A549 (cell line): ENCODE measurements at regions of chr17 and their contacts with region 1.

Region 1: DNA sequence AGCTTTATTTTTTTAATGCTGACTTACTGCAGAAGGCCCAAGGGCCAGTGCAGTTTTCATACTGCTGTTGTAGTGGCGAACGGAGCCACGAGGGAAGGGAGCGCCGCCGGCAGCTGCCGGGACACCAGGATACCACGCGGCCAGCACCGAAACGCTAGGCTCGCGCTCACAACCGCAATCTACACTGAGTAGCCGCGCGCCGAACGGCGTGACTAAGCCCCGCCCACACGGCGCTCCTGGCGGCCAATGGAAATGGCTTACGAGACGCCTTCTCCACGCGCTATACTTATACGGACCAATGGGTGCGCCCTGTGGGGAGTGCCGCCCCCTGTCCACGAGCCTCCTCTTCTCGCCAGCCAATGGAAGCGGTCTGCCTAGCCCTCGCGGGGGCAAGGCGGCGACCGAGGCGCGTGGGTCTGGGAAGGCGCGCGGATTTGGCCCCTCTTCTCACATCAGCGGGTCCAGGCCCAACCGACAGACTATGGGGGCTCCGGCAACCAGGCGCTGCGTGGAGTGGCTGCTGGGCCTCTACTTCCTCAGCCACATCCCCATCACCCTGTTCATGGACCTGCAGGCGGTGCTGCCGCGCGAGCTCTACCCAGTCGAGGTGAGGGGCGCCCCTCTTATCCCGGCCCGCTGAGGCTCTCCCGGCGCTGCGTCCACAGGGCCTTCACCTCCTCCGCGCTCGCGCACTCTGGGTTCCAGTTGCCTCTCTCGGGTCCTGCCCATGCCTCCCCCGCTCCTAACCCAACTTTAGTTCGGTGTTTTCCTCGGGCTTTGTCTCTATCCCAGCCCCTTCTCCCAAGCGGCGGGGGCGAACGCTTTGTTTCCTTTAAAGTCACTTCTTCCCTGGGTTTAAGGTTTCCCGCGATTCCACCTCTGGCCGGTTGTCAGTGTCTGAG is at the start of gene TMEM97:
- DNase-seq: peak; percentile 98
- ATAC-seq: peak; percentile 97 to 99
- H3K4me3 ChIP-seq: peak within 1 kb of the TSS; percentile 73
- H3K27ac ChIP-seq: peak within 1 kb of the TSS; percentile 76 to 88
- H3K4me1 ChIP-seq: peaks cover 45% of the 10 kb centered on the region
- CTCF ChIP-seq: no peak
- EP300 ChIP-seq: no peak
- POLR2A ChIP-seq: peak; percentile 80
- RAD21 ChIP-seq: no peak; a peak in 3 of 5 replicates
- polyA plus RNA-seq, gene TMEM97: 90.9 and 98.7 TPM in 2 replicates

Region 2: DNA sequence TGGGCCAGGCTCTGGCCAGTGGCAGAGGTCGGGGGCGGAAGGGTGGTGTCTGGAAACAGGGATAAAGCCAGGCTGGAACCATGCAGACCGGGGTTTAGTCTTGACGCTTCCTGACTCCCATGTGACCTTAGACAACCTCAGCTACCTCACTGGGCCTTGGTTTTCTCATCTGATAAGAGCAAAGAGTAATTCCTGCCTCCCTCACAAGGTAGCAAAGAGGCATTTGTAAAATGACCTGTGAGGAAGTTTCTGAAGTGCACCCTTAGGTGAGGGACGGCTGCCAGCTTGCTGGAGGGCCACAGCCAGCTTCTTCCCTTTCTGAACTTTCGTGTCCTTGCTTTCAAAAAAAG is 78.0 kb before region 1 on chr17:
- CTCF ChIA-PET with region 1: interaction called, 14 read pairs
- POLR2A ChIA-PET with region 1: no interaction called
- DNase-seq: no peak
- ATAC-seq: 0 out of 6 replicates have a peak, but pooled peaks of 1 of the 2 experiments have one; percentile 21
- H3K4me3 ChIP-seq: no peak overlapping the region
- H3K27ac ChIP-seq: no peak overlapping the region
- H3K4me1 ChIP-seq: no peaks in the 10 kb centered on the region
- CTCF ChIP-seq: no peak
- EP300 ChIP-seq: no peak
- POLR2A ChIP-seq: no peak
- RAD21 ChIP-seq: no peak

Region 3: GRCh38 chr17:28363776-28364650 is 45.0 kb after region 1 on chr17:
- CTCF ChIA-PET with region 1: no interaction called
- POLR2A ChIA-PET with region 1: no interaction called
- DNase-seq: no peak
- ATAC-seq: no peak
- H3K4me3 ChIP-seq: no peak overlapping the region
- H3K27ac ChIP-seq: no peak overlapping the region
- H3K4me1 ChIP-seq: no peaks in the 10 kb centered on the region
- CTCF ChIP-seq: no peak
- EP300 ChIP-seq: no peak
- POLR2A ChIP-seq: no peak
- RAD21 ChIP-seq: no peak

Region 4: GRCh38 chr17:28473542-28473941 is 154.5 kb after region 1 on chr17 and contains the start of gene SLC13A2:
- CTCF ChIA-PET with region 1: no interaction called
- POLR2A ChIA-PET with region 1: no interaction called
- DNase-seq: no peak
- ATAC-seq: peak; percentile 32 to 42; a peak in 4 of 6 replicates
- H3K4me3 ChIP-seq: no peak within 1 kb of the TSS
- H3K27ac ChIP-seq: peak within 1 kb of the TSS in 1 of 2 experiments; percentile 59; a peak in 1 of 6 replicates
- H3K4me1 ChIP-seq: peaks cover 22% of the 10 kb centered on the region
- CTCF ChIP-seq: no peak
- EP300 ChIP-seq: no peak
- POLR2A ChIP-seq: no peak
- RAD21 ChIP-seq: no peak
- polyA plus RNA-seq, gene SLC13A2: 0.06 and 0.16 TPM in 2 replicates